PC-3 (cell line): ENCODE measurements at regions of chr2 and their contacts with region 1.

Region 1: GRCh38 chr2:105521205-105521604 is 122.4 kb upstream of the FHL2 start:
- DNase-seq: peak; percentile 67
- ATAC-seq: no peak
- H3K4me3 ChIP-seq: no peak overlapping the region
- H3K27ac ChIP-seq: no peak overlapping the region
- H3K4me1 ChIP-seq: no peaks in the 10 kb centered on the region
- H3K27me3 ChIP-seq: no peaks in the 10 kb centered on the region
- CTCF ChIP-seq: peak; percentile 88

Region 2: GRCh38 chr2:105344704-105345345 is 176.4 kb before region 1 on chr2:
- CTCF ChIA-PET with region 1: interaction called, 8 read pairs
- POLR2A ChIA-PET with region 1: no interaction called
- intact Hi-C with region 1: loop called (anchors 1 kb)
- DNase-seq: peak; percentile 77
- ATAC-seq: peak; percentile 70
- H3K4me3 ChIP-seq: no peak overlapping the region
- H3K27ac ChIP-seq: no peak overlapping the region
- H3K4me1 ChIP-seq: no peaks in the 10 kb centered on the region
- H3K27me3 ChIP-seq: no peaks in the 10 kb centered on the region
- CTCF ChIP-seq: peak; percentile 75

Region 3: GRCh38 chr2:105369747-105370690 is 151.2 kb before region 1 on chr2:
- CTCF ChIA-PET with region 1: interaction called, 3 read pairs
- POLR2A ChIA-PET with region 1: no interaction called
- intact Hi-C with region 1: loop called (anchors 1 kb)
- DNase-seq: peak; percentile 85
- ATAC-seq: peak; percentile 81
- H3K4me3 ChIP-seq: no peak overlapping the region
- H3K27ac ChIP-seq: peak overlapping the region; percentile 51; the same call in 1 of the 2 replicates
- H3K4me1 ChIP-seq: peaks cover 27% of the 10 kb centered on the region
- H3K27me3 ChIP-seq: no peaks in the 10 kb centered on the region
- CTCF ChIP-seq: peak; percentile 85

Region 4: GRCh38 chr2:105478670-105479069 is 42.5 kb before region 1 on chr2:
- CTCF ChIA-PET with region 1: no interaction called
- POLR2A ChIA-PET with region 1: no interaction called
- intact Hi-C with region 1: no loop called
- DNase-seq: no peak
- ATAC-seq: no peak
- H3K4me3 ChIP-seq: no peak overlapping the region
- H3K27ac ChIP-seq: no peak overlapping the region
- H3K4me1 ChIP-seq: no peaks in the 10 kb centered on the region
- H3K27me3 ChIP-seq: no peaks in the 10 kb centered on the region
- CTCF ChIP-seq: no peak

Region 5: DNA sequence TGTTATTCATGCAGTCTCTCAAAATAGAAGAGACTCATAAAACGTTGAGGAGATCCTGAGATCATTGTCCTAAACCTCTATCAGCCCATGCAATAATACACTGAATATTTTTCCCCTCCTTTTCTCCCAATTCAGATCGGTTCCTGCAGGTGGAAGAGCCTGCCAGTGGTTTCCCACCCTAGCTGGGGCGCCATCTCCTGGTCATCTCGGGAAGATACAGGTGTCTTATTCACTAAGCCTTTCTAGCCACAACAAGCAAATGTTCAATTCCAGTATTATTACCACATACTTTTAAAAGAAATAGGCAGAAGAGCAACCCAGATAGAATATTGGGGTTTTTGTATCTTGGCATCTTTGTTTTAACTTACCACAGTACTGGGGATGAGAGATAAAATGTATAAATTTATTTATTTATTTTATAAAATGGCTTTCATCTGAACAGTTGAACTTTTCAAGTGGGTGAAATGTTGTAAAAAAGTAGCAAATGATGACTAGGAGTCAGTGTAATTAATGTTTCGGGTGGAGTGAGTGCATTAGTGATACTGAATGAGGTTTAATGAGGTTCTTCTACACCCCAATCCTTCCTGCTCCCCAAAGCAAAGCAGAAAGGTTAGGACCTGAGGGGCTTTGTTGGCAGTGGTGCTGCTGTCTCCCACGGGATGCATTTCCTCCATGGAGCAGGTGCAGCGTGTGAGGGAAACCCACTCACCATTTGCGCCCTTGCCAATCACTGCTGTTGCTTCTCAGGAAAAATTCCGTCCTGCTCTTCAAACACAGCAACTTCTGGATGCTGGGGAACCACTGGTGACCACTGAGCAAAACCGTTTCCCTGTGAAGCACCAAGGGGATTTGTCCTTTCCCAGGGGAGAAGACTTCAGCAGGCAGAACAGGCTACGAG is 24.8 kb after region 1 on chr2:
- CTCF ChIA-PET with region 1: no interaction called
- POLR2A ChIA-PET with region 1: interaction called, 3 read pairs
- intact Hi-C with region 1: loop called (anchors 1 kb)
- DNase-seq: peak; percentile 82
- ATAC-seq: peak; percentile 79
- H3K4me3 ChIP-seq: peak overlapping the region; percentile 52
- H3K27ac ChIP-seq: no peak overlapping the region
- H3K4me1 ChIP-seq: peaks cover 8% of the 10 kb centered on the region
- H3K27me3 ChIP-seq: no peaks in the 10 kb centered on the region
- CTCF ChIP-seq: peak; percentile 91